Posterior vena cava (tissue), 2 donors: ENCODE measurements at regions of chr12 and their contacts with region 1.

Region 1: GRCh38 chr12:75759842-75760572 is 248.6 kb upstream of the KRR1 start:
- DNase-seq: no peak

Region 2: GRCh38 chr12:74021937-74022336 is 1738.1 kb before region 1 on chr12:
- intact Hi-C with region 1: loop called in 1 of 2 experiments (anchors 10 kb)
- DNase-seq: no peak

Region 3: DNA sequence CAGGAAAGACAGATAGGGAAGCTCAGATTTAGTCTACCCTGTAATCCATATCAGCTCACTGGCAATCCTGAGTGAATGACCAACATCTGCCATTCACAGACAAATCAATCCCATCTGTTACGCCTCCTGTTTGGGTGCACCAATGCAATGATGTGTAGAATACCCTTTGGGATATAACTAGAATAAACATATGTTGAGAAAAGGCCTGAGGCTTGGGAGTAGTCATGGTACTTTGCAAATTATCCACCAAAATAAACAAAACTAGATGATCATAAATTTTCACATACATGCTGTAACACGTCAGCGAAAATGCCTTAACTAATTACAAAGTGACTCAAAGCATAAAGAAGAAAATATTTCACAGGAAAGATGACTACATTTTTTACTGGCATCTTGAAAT is 629.2 kb before region 1 on chr12:
- intact Hi-C with region 1: no loop called
- DNase-seq: no peak